CD8-positive, alpha-beta T cell (primary cell): ENCODE measurements at regions of chr10 and their contacts with region 1.

Region 1: GRCh38 chr10:104274762-104275721 is 6.1 kb downstream of the GSTO2 start:
- DNase-seq: peak in 8 of 9 experiments; percentile 8 to 66 (median 46)
- ATAC-seq: peak; percentile 87
- H3K4me3 ChIP-seq: peak overlapping the region; percentile 1 to 31
- H3K4me3 Mint-ChIP-seq: peak overlapping the region; percentile 54
- H3K27ac ChIP-seq: no peak overlapping the region
- H3K27ac Mint-ChIP-seq: no peak overlapping the region
- H3K4me1 ChIP-seq: peaks cover 6% of the 10 kb centered on the region
- H3K4me1 Mint-ChIP-seq: peaks cover 2% of the 10 kb centered on the region
- H3K27me3 ChIP-seq: peaks cover 0 to 5% of the 10 kb centered on the region in 2 experiments
- H3K27me3 Mint-ChIP-seq: peaks cover 18% of the 10 kb centered on the region
- CTCF ChIP-seq: peak; percentile 78

Region 2: GRCh38 chr10:104231784-104232612 is 43.0 kb before region 1 on chr10 and contains the start of gene CFAP43:
- CTCF ChIA-PET with region 1: interaction called, 11 read pairs
- POLR2A ChIA-PET with region 1: no interaction called
- intact Hi-C with region 1: no loop called
- DNase-seq: peak; percentile 98 to 100 (median 99)
- ATAC-seq: peak; percentile 99
- H3K4me3 ChIP-seq: peak within 1 kb of the TSS; percentile 64 to 67
- H3K4me3 Mint-ChIP-seq: peak within 1 kb of the TSS; percentile 87
- H3K27ac ChIP-seq: peak within 1 kb of the TSS in 1 of 2 experiments; percentile 52
- H3K27ac Mint-ChIP-seq: peak within 1 kb of the TSS; percentile 79
- H3K4me1 ChIP-seq: peaks cover 4% of the 10 kb centered on the region
- H3K4me1 Mint-ChIP-seq: peaks cover 10% of the 10 kb centered on the region
- H3K27me3 ChIP-seq: peaks cover 0 to 10% of the 10 kb centered on the region in 2 experiments
- H3K27me3 Mint-ChIP-seq: peaks cover 9% of the 10 kb centered on the region
- CTCF ChIP-seq: no peak
- total RNA-seq, gene CFAP43: not detected

Region 3: DNA sequence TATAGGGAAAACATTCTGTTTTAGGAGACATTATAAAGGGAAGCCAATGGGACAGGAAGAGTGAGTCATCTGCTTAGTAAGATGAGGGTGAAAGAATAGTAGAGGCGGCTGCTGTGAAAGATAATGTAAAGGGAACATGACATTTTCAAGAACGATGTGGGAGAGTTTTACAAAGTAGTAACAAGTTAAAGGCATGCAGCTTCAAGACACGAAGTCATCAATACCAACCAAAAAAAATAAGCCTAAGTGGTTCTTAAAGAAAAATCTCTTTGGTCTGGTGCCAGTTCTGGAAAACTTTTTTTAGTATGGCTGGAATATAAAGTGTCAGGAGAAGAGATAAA is 14.3 kb before region 1 on chr10:
- CTCF ChIA-PET with region 1: interaction called, 30 read pairs
- POLR2A ChIA-PET with region 1: interaction called, 4 read pairs
- intact Hi-C with region 1: no loop called
- DNase-seq: peak in 1 of 9 experiments; percentile 15
- ATAC-seq: peak; percentile 47
- H3K4me3 ChIP-seq: no peak overlapping the region
- H3K4me3 Mint-ChIP-seq: peak overlapping the region; percentile 19
- H3K27ac ChIP-seq: peak overlapping the region in 1 of 2 experiments; percentile 38
- H3K27ac Mint-ChIP-seq: peak overlapping the region; percentile 89
- H3K4me1 ChIP-seq: peaks cover 38% of the 10 kb centered on the region
- H3K4me1 Mint-ChIP-seq: peaks cover 81% of the 10 kb centered on the region
- H3K27me3 ChIP-seq: no peaks in the 10 kb centered on the region
- H3K27me3 Mint-ChIP-seq: no peaks in the 10 kb centered on the region
- CTCF ChIP-seq: no peak

Region 4: DNA sequence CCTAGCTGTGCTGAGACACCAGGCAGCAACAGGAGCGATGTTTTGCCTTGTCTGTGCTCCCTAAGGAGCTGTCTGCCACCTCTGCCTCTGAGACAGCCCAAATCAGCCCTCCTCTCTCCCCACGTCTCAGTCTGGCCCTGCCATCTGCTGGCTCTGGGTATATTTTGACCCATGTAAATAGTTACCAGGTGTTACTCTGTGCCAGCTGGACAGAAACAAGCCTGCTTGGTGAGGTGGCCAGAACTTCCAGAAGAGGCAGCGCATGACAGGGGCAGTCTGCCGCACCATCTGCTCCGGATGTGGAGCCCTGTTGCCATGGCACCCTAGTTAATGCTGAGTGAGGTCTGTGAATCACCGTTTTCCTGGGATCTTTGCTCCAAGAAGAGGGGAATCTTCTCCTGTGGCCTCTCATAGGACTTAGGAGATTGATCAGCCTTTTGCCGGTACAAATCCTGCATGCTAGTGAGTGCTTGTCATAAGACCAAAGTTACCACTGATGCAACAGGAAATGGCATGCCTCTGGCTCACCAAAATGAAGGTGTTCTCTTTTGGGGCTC is 25.8 kb after region 1 on chr10:
- CTCF ChIA-PET with region 1: interaction called, 16 read pairs
- POLR2A ChIA-PET with region 1: interaction called, 3 read pairs
- intact Hi-C with region 1: no loop called
- DNase-seq: peak in 2 of 9 experiments; percentile 27 to 53
- ATAC-seq: no peak
- H3K4me3 ChIP-seq: no peak overlapping the region
- H3K4me3 Mint-ChIP-seq: peak overlapping the region; percentile 10
- H3K27ac ChIP-seq: no peak overlapping the region
- H3K27ac Mint-ChIP-seq: peak overlapping the region; percentile 27
- H3K4me1 ChIP-seq: peaks cover 31% of the 10 kb centered on the region
- H3K4me1 Mint-ChIP-seq: peaks cover 53% of the 10 kb centered on the region
- H3K27me3 ChIP-seq: no peaks in the 10 kb centered on the region
- H3K27me3 Mint-ChIP-seq: no peaks in the 10 kb centered on the region
- CTCF ChIP-seq: no peak

Region 5: GRCh38 chr10:104337974-104338735 is 63.1 kb after region 1 on chr10 and contains the start of gene ITPRIP:
- CTCF ChIA-PET with region 1: interaction called, 15 read pairs
- POLR2A ChIA-PET with region 1: interaction called, 14 read pairs
- intact Hi-C with region 1: no loop called
- DNase-seq: peak; percentile 47 to 89 (median 76)
- ATAC-seq: peak; percentile 67
- H3K4me3 ChIP-seq: peak within 1 kb of the TSS; percentile 92 to 98
- H3K4me3 Mint-ChIP-seq: peak within 1 kb of the TSS; percentile 93
- H3K27ac ChIP-seq: peak within 1 kb of the TSS; percentile 92 to 93
- H3K27ac Mint-ChIP-seq: peak within 1 kb of the TSS; percentile 97
- H3K4me1 ChIP-seq: peaks cover 46% of the 10 kb centered on the region
- H3K4me1 Mint-ChIP-seq: peaks cover 54% of the 10 kb centered on the region
- H3K27me3 ChIP-seq: no peaks in the 10 kb centered on the region
- H3K27me3 Mint-ChIP-seq: no peaks in the 10 kb centered on the region
- CTCF ChIP-seq: no peak
- total RNA-seq, gene ITPRIP: 212 to 214 TPM

Region 6: GRCh38 chr10:104353325-104354048 is 78.4 kb after region 1 on chr10 and contains the start of gene CFAP58:
- CTCF ChIA-PET with region 1: interaction called, 112 read pairs
- POLR2A ChIA-PET with region 1: interaction called, 3 read pairs
- intact Hi-C with region 1: no loop called
- DNase-seq: peak; percentile 76 to 95 (median 89)
- ATAC-seq: peak; percentile 84
- H3K4me3 ChIP-seq: peak within 1 kb of the TSS; percentile 46 to 53
- H3K4me3 Mint-ChIP-seq: peak within 1 kb of the TSS; percentile 44
- H3K27ac ChIP-seq: peak within 1 kb of the TSS in 1 of 2 experiments; percentile 58
- H3K27ac Mint-ChIP-seq: peak within 1 kb of the TSS; percentile 73
- H3K4me1 ChIP-seq: peaks cover 19% of the 10 kb centered on the region
- H3K4me1 Mint-ChIP-seq: peaks cover 2% of the 10 kb centered on the region
- H3K27me3 ChIP-seq: no peaks in the 10 kb centered on the region
- H3K27me3 Mint-ChIP-seq: no peaks in the 10 kb centered on the region
- CTCF ChIP-seq: peak; percentile 74
- total RNA-seq, gene CFAP58: not detected